Activated B cell treated with CpG ODN at 0.5 μM for 24 hours (primary cell): ENCODE measurements at regions of chr14 and their contacts with region 1.

Region 1: DNA sequence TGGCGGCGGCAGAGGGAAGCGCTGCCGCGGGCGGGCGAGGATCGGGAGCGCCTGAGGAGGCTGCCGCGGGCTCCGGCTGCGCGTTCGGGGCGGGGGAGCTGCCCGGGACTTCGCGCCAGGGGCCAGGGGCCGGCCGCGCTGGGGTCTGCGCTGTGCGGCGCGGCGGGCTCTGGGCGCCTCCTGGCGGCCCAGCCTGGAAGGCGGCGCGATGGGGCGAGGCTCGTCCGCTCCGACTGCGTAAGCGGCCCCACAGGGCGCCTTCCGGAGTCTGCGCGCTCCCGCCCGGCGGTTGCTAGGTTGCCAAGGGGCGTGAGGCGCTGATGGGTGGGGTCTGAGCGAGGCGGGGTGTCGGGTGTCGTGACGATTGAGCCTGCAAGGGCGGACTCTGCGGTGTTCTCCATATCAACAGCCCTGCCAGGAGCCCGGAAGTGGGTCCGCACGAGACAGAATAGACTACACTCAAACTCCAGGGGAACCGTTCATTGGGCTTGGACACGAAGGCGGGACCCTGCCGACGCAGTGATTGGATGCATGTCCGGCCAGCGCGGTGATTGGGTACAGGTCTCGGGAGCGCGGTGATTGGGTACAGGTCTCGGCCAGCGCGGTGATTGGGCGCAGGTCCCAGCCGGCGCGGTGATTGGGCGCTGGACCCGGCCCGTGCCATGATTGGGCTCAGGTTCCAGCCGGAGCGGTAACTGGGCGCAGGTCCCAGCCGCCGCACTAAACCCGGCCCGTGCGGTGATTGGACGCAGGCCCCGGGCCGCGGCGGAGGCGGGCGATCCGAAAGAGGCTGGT is at the start of gene TEDC1:
- DNase-seq: peak; percentile 96
- ATAC-seq: peak; percentile 73
- H3K4me3 Mint-ChIP-seq: peak within 1 kb of the TSS; percentile 87
- H3K27ac Mint-ChIP-seq: peak within 1 kb of the TSS; percentile 97
- H3K4me1 Mint-ChIP-seq: peaks cover 33% of the 10 kb centered on the region
- H3K27me3 Mint-ChIP-seq: no peaks in the 10 kb centered on the region
- CTCF ChIP-seq: peak; percentile 57
- total RNA-seq, gene TEDC1: 16.7 and 18.1 TPM in 2 replicates

Region 2: DNA sequence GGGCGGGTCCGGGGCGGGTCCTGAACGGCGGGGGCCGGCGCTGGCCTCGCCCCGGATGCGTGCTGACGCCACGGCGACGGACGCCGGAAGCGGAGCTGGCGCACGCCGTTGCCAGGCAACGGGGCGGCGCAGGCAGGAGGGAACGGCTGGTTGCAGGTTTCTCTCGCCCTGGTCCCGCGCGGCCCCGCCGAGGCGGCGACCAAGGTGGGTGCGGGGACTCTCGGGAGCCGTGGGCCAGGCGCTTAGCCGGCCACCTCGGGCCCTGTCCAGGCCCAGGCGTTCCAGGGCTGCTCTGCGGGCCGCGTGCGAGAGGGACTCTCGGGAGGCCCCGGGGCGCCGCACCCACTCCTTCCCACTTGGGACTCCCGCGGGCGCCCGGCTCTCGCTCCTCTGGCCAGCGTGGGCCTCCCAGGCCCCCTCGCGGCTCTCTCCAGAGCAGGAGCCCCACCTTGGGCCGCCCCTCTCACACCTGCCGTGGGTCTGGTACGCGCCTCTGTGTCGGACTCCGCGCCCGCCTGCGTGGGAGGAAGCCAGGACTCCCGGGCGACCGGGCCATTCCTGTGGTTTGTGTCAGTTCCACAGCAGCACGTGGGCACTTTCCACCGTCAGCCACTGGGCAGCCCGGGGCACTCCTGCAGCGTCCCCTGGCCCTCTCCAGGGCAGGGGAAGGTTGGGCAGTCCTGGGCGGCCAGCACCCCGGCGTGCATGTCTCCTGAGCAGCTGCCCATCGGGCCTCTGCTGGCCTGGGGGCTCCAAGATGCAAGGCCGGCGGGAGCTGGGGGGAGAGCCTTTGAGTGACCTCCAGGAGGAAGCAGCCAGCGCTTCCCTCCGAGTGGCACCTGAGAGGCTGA is 504.9 kb before region 1 on chr14 and contains the start of gene CLBA1:
- CTCF ChIA-PET with region 1: no interaction called
- POLR2A ChIA-PET with region 1: no interaction called
- intact Hi-C with region 1: loop called (anchors 5 kb)
- DNase-seq: peak; percentile 88
- ATAC-seq: peak; percentile 92
- H3K4me3 Mint-ChIP-seq: peak within 1 kb of the TSS; percentile 72
- H3K27ac Mint-ChIP-seq: peak within 1 kb of the TSS; percentile 71
- H3K4me1 Mint-ChIP-seq: peaks cover 11% of the 10 kb centered on the region
- H3K27me3 Mint-ChIP-seq: peaks cover 5% of the 10 kb centered on the region
- CTCF ChIP-seq: no peak
- total RNA-seq, gene CLBA1: 2.7 and 3.9 TPM in 2 replicates

Region 3: DNA sequence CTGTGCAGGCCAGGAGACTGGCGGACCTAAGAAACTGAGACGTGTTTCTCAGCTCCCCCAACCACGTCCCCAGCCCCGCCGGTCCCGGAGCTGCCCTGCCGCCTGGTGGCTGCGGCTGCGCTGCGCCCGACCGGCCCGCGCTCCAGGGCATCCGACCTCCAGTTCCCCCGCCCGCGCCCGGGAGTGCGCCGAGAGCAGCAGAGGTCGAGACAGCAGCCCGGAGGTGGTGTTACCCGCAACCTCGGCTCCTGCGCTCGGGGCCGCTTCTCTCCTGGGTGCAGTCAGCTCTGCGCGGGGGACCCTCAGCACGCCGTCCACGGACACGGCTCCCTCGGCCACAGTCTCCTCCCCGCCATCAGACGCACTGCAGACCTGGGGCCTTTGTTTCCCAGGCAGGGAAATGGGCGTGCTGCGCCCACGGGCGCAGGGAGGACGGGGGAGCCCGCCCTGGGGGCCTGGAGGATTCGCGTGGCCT is 403.9 kb before region 1 on chr14:
- CTCF ChIA-PET with region 1: interaction called, 3 read pairs
- POLR2A ChIA-PET with region 1: no interaction called
- intact Hi-C with region 1: loop called (anchors 1 kb)
- DNase-seq: peak; percentile 81
- ATAC-seq: peak; percentile 89
- H3K4me3 Mint-ChIP-seq: peak overlapping the region; percentile 80
- H3K27ac Mint-ChIP-seq: no peak overlapping the region
- H3K4me1 Mint-ChIP-seq: peaks cover 14% of the 10 kb centered on the region
- H3K27me3 Mint-ChIP-seq: peaks cover 6% of the 10 kb centered on the region
- CTCF ChIP-seq: peak; percentile 82

Region 4: GRCh38 chr14:105314287-105315200 is 176.2 kb before region 1 on chr14 and contains the start of gene PACS2:
- CTCF ChIA-PET with region 1: no interaction called
- POLR2A ChIA-PET with region 1: no interaction called
- intact Hi-C with region 1: loop called (anchors 1 kb)
- DNase-seq: peak; percentile 86
- ATAC-seq: peak; percentile 86
- H3K4me3 Mint-ChIP-seq: peak within 1 kb of the TSS; percentile 86
- H3K27ac Mint-ChIP-seq: peak within 1 kb of the TSS; percentile 46
- H3K4me1 Mint-ChIP-seq: peaks cover 10% of the 10 kb centered on the region
- H3K27me3 Mint-ChIP-seq: no peaks in the 10 kb centered on the region
- CTCF ChIP-seq: no peak
- total RNA-seq, gene PACS2: 37.4 and 48.0 TPM in 2 replicates

Region 5: DNA sequence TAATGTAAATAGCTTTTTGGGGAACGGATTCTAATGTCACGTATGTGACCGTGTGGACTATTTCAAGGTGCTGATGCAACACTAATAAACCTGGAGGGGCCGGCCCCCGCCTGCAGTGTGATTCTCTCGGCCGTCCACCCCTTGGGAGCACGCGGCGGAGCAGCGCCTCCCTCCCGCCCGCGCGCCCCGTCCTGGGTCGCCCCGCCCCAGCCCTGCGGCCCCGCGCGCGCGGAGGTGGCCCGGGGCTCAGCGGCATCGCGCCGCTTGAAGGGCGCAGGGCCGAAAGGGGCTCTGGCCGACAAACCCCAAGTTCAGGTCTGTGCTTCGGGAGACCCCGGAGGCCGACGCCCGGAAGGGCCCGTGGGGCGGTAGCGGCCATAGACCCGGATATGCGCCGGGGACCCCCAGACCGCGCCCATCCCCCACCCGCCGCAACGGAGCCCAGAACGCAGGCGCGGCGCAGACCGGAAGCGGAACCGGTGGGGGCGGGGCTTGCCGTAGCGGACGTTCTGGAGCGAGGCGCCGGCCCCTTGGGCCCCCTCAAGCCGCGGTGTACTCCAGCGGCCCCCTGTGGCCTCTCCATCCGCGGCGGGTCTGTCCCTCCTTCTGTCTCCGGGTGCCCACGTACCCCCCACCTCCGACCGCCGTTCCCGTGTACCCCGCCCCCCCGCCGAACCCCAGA is 92.6 kb before region 1 on chr14 and contains the start of gene TEX22:
- CTCF ChIA-PET with region 1: interaction called, 6 read pairs
- POLR2A ChIA-PET with region 1: interaction called, 14 read pairs
- intact Hi-C with region 1: loop called (anchors 1 kb)
- DNase-seq: peak; percentile 99
- ATAC-seq: peak; percentile 86
- H3K4me3 Mint-ChIP-seq: peak within 1 kb of the TSS; percentile 90
- H3K27ac Mint-ChIP-seq: peak within 1 kb of the TSS; percentile 91
- H3K4me1 Mint-ChIP-seq: peaks cover 24% of the 10 kb centered on the region
- H3K27me3 Mint-ChIP-seq: no peaks in the 10 kb centered on the region
- CTCF ChIP-seq: no peak
- total RNA-seq, gene TEX22: 2.8 and 5.7 TPM in 2 replicates

Region 6: DNA sequence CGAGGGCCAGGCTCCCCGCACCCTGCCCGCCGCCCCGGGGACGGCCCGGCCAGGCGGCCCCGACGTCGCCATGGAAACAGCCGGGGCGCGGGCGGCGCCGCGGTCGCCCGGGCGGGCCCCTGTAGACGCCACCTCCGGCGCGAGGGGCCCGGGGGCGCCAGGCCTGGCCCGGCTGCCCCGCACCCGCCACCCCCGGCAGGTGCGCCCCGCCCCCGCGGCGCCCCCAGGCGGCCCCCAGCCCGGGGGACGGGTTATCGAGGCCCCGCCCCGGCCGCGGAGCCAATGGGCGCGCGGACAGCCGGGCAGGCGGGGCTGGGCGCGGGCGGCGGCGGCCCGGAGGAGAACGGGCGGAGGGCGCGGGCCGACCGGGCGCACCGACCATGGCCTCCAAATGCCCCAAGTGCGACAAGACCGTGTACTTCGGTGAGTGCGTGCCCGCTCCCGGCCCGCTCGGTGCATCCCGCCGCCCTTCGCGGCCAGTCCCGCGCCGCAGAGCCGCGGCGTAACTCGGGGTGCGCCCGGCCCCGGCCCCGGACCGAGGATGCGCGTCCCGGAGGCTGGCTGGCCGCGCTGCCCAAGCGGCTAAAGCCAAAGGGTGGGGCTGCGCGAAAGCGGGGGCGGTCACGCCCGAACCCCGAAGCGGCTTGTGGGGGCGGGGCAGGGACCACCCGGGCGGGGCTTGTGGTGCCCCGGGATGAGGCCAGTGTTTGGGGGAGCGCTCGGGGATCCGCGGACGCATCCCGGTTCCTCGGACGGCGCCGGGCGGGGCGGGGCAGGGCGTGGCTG is 16.1 kb before region 1 on chr14 and contains the start of gene CRIP2:
- CTCF ChIA-PET with region 1: interaction called, 14 read pairs
- POLR2A ChIA-PET with region 1: interaction called, 8 read pairs
- intact Hi-C with region 1: loop called (anchors 2 kb)
- DNase-seq: peak; percentile 32
- ATAC-seq: peak; percentile 38
- H3K4me3 Mint-ChIP-seq: peak within 1 kb of the TSS; percentile 72
- H3K27ac Mint-ChIP-seq: no peak within 1 kb of the TSS
- H3K4me1 Mint-ChIP-seq: peaks cover 37% of the 10 kb centered on the region
- H3K27me3 Mint-ChIP-seq: peaks cover 3% of the 10 kb centered on the region
- CTCF ChIP-seq: no peak
- total RNA-seq, gene CRIP2: 2.9 and 3.0 TPM in 2 replicates